Activated T-helper 1 cell treated with anti-CD3 and anti-CD28 coated beads, Interleukin-12 subunit alpha, Interleukin-12 subunit beta, Interleukin-2, Interleukin-4 antibody, amounts not matched to agents 30 ng/mL and 10 ng/mL and 1 ng/mL, durations not matched to agents 14 hours and 24 hours and 36 hours (primary cell): ENCODE measurements at regions of chr13 and their contacts with region 1.

Region 1: DNA sequence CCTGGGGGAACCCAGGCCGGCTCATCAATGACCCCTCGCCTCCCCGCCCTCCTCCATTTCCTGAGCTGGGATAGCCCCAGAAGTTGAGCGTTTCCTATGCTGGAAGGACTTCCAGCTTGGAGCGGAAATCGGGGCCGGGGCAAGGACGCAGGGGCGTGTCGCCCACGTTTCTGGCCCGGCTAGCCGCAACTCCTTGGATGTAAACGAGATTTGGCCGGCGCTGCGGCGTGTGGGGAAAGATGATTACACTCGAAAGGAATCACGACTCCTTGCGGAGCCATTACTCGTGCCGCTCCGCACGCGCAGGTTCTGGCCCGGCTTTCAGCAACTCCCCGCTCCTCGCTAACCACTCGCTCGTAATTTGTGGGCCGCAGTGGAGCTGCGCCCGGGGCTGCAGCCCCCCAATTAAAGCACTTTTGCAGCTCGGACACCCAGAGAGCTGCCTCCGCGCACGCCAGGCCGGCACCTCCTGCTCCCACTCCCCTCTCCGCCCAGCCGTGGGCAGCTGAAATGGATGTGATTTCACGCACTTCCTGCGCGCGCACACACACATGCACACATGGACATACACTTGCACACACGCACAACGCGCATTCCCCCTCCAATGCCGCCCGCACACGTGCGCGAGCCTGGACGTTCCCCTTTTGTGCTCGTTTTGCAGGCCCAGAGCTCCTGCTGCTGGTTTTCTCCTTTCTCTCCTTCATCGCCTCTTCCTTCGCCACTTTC is 15.7 kb downstream of the ZIC5 start:
- DNase-seq: no peak
- H3K4me3 Mint-ChIP-seq: no peak overlapping the region
- H3K27ac Mint-ChIP-seq: peak overlapping the region; percentile 72
- H3K4me1 Mint-ChIP-seq: peaks cover 5% of the 10 kb centered on the region
- H3K27me3 Mint-ChIP-seq: peaks cover 78% of the 10 kb centered on the region

Region 2: GRCh38 chr13:99442273-99442895 is 513.5 kb before region 1 on chr13:
- intact Hi-C with region 1: loop called (anchors 1 kb)
- DNase-seq: peak; percentile 49
- H3K4me3 Mint-ChIP-seq: no peak overlapping the region
- H3K27ac Mint-ChIP-seq: no peak overlapping the region
- H3K4me1 Mint-ChIP-seq: peaks cover 6% of the 10 kb centered on the region
- H3K27me3 Mint-ChIP-seq: peaks cover 34% of the 10 kb centered on the region

Region 3: GRCh38 chr13:99830931-99831330 is 125.0 kb before region 1 on chr13:
- intact Hi-C with region 1: no loop called
- DNase-seq: no peak
- H3K4me3 Mint-ChIP-seq: no peak overlapping the region
- H3K27ac Mint-ChIP-seq: no peak overlapping the region
- H3K4me1 Mint-ChIP-seq: no peaks in the 10 kb centered on the region
- H3K27me3 Mint-ChIP-seq: peaks cover 5% of the 10 kb centered on the region

Region 4: GRCh38 chr13:99895223-99895994 is 60.5 kb before region 1 on chr13:
- intact Hi-C with region 1: loop called (anchors 2 kb)
- DNase-seq: no peak
- H3K4me3 Mint-ChIP-seq: peak overlapping the region; percentile 79
- H3K27ac Mint-ChIP-seq: peak overlapping the region; percentile 41
- H3K4me1 Mint-ChIP-seq: peaks cover 15% of the 10 kb centered on the region
- H3K27me3 Mint-ChIP-seq: peaks cover 61% of the 10 kb centered on the region

Region 5: GRCh38 chr13:99925999-99926731 is 29.7 kb before region 1 on chr13:
- intact Hi-C with region 1: no loop called
- DNase-seq: no peak
- H3K4me3 Mint-ChIP-seq: no peak overlapping the region
- H3K27ac Mint-ChIP-seq: no peak overlapping the region
- H3K4me1 Mint-ChIP-seq: peaks cover 5% of the 10 kb centered on the region
- H3K27me3 Mint-ChIP-seq: peaks cover 16% of the 10 kb centered on the region

Region 6: DNA sequence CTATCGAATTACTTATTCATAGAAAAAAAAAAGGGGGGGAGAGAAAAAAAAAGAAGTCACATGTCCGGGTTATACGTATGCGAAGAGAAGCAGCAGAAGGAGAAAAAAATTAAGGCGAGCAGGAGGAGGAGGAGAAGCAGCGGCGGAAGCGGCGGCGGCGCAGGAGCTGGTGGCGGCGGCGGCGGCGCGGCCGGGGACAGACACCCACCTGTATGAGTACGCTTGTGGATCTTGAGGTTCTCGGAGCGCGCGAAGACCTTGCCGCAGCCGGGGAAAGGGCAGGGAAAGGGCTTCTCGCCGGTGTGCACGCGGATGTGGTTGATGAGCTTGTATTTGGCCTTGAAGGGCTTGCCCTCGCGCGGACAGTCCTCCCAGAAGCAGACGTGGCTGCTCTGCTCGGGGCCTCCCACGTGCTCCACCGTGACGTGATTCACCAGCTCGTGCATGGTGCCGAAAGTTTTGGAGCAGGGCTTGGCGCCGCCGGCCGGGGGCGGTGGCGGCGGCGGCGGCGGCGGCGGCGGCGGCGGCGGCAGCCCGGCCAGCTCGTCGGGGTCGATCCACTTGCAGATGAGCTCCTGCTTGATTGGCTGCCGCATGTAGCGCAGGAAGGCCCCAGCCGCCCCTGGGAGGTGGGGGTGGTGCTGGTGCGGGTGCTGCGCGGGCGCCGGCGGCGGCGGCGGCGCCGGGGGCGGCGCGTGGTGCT is 14.2 kb after region 1 on chr13:
- intact Hi-C with region 1: loop called (anchors 1 kb)
- DNase-seq: no peak
- H3K4me3 Mint-ChIP-seq: peak overlapping the region; percentile 54
- H3K27ac Mint-ChIP-seq: peak overlapping the region; percentile 87
- H3K4me1 Mint-ChIP-seq: peaks cover 17% of the 10 kb centered on the region
- H3K27me3 Mint-ChIP-seq: peaks cover 65% of the 10 kb centered on the region

Region 7: DNA sequence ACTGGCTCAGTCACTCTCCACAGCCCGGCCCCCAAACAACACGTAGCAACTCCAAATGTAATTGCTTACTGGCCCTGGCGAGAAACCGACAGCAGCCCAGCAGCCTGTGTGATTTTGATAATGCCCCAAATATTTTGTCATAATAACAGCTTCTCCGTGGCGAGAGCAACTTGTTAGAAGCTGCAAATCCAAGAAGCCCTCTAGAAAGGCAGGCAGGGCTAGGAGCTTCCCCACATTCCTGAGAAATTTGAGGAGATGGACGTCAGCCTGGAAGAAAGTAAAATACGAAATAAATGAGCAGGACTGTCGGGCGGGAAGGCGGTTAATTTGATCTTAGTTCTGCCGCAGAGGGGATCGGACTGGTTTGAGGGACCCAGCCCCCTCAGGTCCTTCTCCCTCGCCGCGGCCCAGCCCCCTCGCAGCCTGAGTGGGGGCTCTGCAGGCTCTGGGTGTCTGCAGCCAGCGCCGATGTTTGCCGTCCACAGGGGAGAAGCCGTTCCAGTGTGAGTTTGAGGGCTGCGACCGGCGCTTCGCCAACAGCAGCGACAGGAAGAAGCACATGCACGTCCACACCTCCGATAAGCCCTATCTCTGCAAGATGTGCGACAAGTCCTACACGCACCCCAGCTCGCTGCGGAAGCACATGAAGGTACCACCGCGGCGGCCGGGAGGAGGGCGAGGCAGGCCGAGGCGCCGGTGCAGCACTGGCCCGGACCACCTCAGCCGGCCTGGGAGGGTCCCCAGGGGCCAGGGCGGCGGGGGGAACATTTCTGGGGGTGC is 28.7 kb after region 1 on chr13:
- intact Hi-C with region 1: loop called (anchors 2 kb)
- DNase-seq: no peak
- H3K4me3 Mint-ChIP-seq: no peak overlapping the region
- H3K27ac Mint-ChIP-seq: peak overlapping the region; percentile 67
- H3K4me1 Mint-ChIP-seq: peaks cover 10% of the 10 kb centered on the region
- H3K27me3 Mint-ChIP-seq: peaks cover 60% of the 10 kb centered on the region

Region 8: DNA sequence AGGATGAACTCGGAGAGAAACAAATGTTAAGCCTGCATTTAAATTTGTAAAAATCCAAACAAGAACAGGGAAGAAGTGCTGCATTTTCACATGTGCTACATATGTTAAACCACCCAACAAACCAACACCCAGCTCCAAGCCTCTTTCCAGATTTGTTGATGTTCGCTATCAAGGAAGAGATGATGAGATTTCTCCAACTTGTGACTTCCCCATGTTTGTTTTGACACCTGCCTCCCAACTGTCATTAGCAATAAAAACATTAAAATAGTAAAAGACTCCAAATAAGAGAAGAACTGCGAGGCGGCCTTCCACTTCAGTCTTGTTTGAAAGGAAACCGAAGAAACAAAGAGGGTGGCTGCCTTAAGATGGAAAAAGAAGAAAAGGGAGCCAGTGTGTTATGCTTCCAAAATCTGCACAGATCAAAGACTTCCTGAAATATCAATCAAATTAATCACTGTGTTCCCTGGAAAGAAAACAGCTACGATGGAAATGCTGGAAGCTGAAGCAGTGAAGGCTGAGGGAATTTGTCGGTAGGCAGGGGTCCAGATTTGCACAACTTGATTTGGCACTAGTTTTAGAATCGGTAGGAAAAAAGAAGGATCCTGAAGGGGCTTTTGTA is 646.7 kb after region 1 on chr13:
- intact Hi-C with region 1: no loop called
- DNase-seq: no peak
- H3K4me3 Mint-ChIP-seq: no peak overlapping the region
- H3K27ac Mint-ChIP-seq: no peak overlapping the region
- H3K4me1 Mint-ChIP-seq: no peaks in the 10 kb centered on the region
- H3K27me3 Mint-ChIP-seq: no peaks in the 10 kb centered on the region

Region 9: GRCh38 chr13:101059793-101060192 is 1103.9 kb after region 1 on chr13:
- intact Hi-C with region 1: no loop called
- DNase-seq: no peak
- H3K4me3 Mint-ChIP-seq: no peak overlapping the region
- H3K27ac Mint-ChIP-seq: no peak overlapping the region
- H3K4me1 Mint-ChIP-seq: no peaks in the 10 kb centered on the region
- H3K27me3 Mint-ChIP-seq: peaks cover 8% of the 10 kb centered on the region

Region 10: DNA sequence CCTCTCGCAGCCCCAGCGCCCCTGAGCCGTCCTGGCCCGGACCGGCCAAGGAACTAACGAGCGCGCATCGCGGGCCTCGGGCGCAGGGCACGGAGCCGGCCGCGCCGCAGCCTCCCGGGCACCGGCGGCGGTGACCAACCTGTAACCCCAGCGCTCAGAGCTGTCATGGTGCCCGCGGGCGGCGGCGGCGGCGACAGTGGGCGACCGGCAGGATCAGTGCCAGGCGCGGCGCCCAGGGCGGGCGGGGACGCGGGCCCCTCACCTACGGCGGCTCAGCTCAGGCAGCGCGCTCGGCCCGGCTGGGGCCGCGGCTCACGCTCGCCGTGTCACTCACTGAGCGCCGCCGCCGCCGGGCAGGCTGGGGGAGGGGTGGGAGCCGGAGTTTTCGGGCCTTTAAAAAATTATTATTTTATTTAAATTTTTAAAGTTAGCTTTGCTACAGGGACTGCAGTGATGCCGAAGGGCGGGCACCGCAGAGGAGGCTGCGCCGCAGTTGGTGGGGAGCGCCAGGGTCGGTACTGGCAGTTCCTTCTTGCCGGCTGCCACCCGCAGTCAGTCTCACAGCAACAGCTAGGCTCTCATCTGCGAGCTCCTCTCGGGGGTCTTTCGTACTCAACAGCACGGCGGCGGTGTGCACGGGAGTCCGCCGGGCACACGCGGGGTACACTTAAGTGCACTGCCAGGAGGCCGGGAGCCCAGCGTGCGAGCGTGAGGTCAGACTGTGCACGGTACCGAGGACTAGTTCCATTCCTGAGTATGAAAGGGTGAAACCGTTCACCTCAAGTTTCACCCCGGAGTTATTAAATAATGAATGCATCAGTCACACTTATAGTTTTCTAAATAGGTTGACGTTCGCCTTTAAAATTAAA is 1460.5 kb after region 1 on chr13 and contains the start of gene NALCN:
- intact Hi-C with region 1: loop called (anchors 10 kb)
- DNase-seq: no peak
- H3K4me3 Mint-ChIP-seq: no peak within 1 kb of the TSS
- H3K27ac Mint-ChIP-seq: no peak within 1 kb of the TSS
- H3K4me1 Mint-ChIP-seq: no peaks in the 10 kb centered on the region
- H3K27me3 Mint-ChIP-seq: peaks cover 29% of the 10 kb centered on the region
- total RNA-seq, gene NALCN: not detected in 2 replicates